Mammary epithelial cell (primary cell): ENCODE measurements at regions of chr3 and their contacts with region 1.

Region 1: DNA sequence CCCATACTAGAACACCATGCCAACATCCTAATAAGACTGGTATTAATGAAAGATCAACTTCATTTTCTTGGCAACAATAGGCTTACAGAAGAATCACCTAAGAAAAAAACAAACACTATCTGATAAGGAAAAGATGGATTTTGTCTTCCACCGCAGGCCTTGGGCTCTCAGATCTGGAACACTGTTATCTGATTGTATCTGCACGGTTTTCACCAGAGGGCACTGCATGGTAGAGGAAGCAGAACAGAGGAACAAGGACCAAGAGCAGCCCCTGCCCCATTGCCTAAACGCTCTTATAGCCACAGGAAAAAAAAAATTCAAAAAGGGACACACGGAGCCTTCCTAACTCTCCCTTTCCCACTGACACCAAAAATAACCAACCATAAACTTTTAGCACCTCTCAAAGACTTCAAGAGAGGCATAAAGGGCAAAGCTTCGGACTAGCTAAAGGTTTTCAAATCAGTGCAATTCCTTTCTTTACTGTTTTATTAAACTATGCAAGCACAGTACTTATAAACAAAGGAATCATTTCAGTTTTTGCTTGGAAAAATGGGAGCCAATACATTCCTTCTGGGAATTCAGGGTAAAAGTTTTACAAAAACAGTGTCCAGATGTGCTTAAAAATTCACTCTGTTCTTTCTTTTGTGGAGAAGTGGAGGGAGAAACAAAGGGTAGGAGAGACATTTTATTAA is 23.3 kb downstream of the IL17RD start:
- DNase-seq: no peak
- H3K4me3 ChIP-seq: no peak overlapping the region
- H3K27ac ChIP-seq: no peak overlapping the region
- H3K4me1 ChIP-seq: no peaks in the 10 kb centered on the region
- H3K27me3 ChIP-seq: no peaks in the 10 kb centered on the region
- CTCF ChIP-seq: peak in 1 of 2 donors; percentile 10

Region 2: GRCh38 chr3:57094575-57094974 is 47.3 kb before region 1 on chr3:
- CTCF ChIA-PET with region 1: no interaction called
- dilution Hi-C with region 1: loop called (anchors 5 kb)
- in situ Hi-C with region 1: no loop called
- intact Hi-C with region 1: no loop called
- DNase-seq: no peak
- H3K4me3 ChIP-seq: no peak overlapping the region
- H3K27ac ChIP-seq: no peak overlapping the region
- H3K4me1 ChIP-seq: peaks cover 15% of the 10 kb centered on the region
- H3K27me3 ChIP-seq: no peaks in the 10 kb centered on the region
- CTCF ChIP-seq: no peak

Region 3: DNA sequence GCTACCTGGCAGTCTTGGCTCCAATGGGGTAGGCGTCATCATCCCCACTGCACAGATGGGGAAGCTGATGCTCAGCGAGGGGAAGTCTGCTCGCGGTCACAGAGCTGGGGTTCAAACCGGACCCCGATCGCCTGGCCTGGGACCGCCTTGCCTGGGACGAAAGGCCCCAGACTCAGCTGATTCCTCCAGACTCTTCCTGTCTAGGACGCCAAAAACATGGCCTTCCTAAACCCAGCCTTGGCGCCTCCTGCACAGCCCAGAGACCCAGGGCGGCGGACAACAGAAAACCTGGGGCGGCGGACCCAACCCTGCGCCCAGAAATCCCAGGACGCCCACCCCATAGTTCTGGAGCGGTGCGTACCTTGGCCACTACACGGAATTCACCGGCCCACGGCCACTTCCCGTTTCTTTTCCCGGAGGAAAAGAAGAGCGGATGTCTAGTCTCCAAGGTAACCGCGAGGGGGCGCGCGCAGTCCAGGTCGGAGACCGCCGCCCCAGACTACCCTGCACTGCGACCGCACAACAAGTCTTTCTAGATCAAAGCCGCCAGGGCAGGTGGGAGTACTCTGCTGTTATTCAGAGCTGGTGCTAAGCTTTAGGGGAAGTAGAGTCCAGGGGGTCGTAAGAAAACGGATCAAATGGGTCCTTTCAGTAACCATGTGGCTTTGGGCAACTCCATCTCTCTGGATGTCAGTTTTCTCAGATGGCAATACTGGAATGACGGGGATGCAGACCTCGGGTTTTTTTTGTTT is 28.2 kb after region 1 on chr3:
- CTCF ChIA-PET with region 1: no interaction called
- dilution Hi-C with region 1: no loop called
- in situ Hi-C with region 1: no loop called
- intact Hi-C with region 1: no loop called
- DNase-seq: peak; percentile 48
- H3K4me3 ChIP-seq: peak overlapping the region; percentile 35 to 44 (median 41)
- H3K27ac ChIP-seq: no peak overlapping the region
- H3K4me1 ChIP-seq: peaks cover 5% of the 10 kb centered on the region
- H3K27me3 ChIP-seq: no peaks in the 10 kb centered on the region
- CTCF ChIP-seq: peak; percentile 46 to 79